Activated T-helper 2 cell treated with anti-CD3 and anti-CD28 coated beads, Interferon-gamma antibody, Interleukin-2, Interleukin-4, amounts not matched to agents 10 μg/mL and 5 μg/mL and 100 μg/mL, durations not matched to agents 14 hours and 24 hours and 36 hours (primary cell): ENCODE measurements at regions of chr4 and their contacts with region 1.

Region 1: DNA sequence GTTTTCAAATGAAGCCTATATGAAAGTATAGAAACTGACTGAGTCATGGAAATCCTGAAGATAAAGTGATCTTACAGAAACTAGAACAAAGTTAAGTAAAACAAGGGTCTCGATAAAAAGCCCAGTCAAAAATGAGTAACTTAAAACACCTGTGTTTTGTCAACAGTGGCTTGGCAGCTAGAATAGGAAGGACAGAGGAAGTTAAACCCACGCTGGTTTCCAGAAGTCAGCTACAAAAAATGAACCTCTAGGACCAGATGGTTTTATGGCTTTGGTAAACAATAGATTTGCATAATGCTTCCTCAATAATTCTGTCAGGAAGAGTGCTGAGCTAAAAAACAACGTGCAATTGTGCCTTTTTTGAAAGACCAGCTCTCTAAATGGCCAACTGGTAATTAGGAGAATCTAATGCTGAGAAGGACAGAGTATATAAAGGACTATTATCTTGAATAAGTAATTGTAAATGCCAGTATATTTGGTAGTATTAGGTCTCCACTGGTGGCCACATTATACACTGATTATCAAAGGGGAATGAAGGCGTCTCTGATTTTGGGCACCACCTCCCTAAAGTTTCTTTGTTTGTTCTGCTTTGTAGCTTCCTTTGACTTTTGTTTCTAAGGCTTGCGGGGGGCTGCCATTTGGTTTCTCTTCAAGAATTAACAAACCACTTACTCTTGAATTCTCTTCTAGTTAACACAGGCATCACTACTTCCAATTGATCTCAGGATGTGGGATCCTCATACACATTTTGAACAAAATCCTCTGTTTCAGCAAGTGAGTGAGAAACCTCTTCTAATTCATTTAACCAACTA is 72.2 kb upstream of the PPP3CA start:
- DNase-seq: no peak
- H3K4me3 Mint-ChIP-seq: peak overlapping the region; percentile 1
- H3K27ac Mint-ChIP-seq: peak overlapping the region; percentile 0
- H3K4me1 Mint-ChIP-seq: peaks cover 46% of the 10 kb centered on the region
- H3K27me3 Mint-ChIP-seq: peaks cover 17% of the 10 kb centered on the region

Region 2: DNA sequence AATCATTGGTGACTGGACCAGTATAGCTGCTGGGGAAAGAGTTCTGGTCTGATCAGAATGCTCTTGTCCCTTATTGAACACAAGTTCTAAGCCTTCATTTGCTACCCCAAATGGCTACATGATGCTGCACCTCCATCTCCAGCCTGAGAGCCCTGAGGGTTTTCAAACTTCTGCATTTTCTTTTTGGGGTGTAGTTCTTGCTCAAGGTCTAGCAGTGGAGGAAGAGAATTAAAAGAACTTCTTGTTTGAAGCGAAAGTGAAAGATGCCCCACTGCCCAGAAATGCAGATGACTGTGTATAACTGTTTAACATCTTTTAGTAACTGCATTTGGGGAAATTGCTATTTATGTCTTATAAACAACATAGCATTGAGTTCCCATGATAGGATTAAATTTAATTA is 1563.9 kb before region 1 on chr4:
- intact Hi-C with region 1: loop called (anchors 10 kb)
- DNase-seq: no peak
- H3K4me3 Mint-ChIP-seq: peak overlapping the region; percentile 3
- H3K27ac Mint-ChIP-seq: peak overlapping the region; percentile 83
- H3K4me1 Mint-ChIP-seq: peaks cover 68% of the 10 kb centered on the region
- H3K27me3 Mint-ChIP-seq: no peaks in the 10 kb centered on the region

Region 3: GRCh38 chr4:101020956-101021355 is 398.6 kb before region 1 on chr4:
- intact Hi-C with region 1: loop called (anchors 2 kb)
- DNase-seq: peak; percentile 10
- H3K4me3 Mint-ChIP-seq: peak overlapping the region; percentile 57
- H3K27ac Mint-ChIP-seq: peak overlapping the region; percentile 74
- H3K4me1 Mint-ChIP-seq: peaks cover 54% of the 10 kb centered on the region
- H3K27me3 Mint-ChIP-seq: no peaks in the 10 kb centered on the region

Region 4: DNA sequence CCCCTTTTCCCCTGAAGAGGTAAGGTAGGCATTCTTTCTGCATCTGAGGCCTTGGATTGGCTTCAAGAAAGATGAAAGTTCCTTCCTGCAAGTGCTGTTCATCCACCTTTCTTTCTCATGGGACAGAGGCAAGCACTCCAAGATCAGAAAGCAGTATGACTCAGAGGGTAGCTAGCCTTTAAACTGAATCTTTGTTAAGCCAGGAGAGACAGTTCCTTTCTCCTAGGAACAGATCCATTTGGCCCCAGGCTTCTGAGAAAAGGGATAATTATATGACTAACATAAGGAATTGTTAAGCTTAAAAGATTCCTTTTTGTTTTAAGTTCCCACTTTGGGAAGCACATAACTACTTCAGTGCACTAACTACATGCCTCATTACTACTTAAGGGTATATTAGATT is 264.2 kb before region 1 on chr4:
- intact Hi-C with region 1: loop called (anchors 5 kb)
- DNase-seq: no peak
- H3K4me3 Mint-ChIP-seq: no peak overlapping the region
- H3K27ac Mint-ChIP-seq: no peak overlapping the region
- H3K4me1 Mint-ChIP-seq: peaks cover 29% of the 10 kb centered on the region
- H3K27me3 Mint-ChIP-seq: no peaks in the 10 kb centered on the region

Region 5: GRCh38 chr4:101288365-101289145 is 131.0 kb before region 1 on chr4:
- intact Hi-C with region 1: loop called (anchors 5 kb)
- DNase-seq: no peak
- H3K4me3 Mint-ChIP-seq: no peak overlapping the region
- H3K27ac Mint-ChIP-seq: no peak overlapping the region
- H3K4me1 Mint-ChIP-seq: peaks cover 7% of the 10 kb centered on the region
- H3K27me3 Mint-ChIP-seq: peaks cover 1% of the 10 kb centered on the region

Region 6: GRCh38 chr4:101400096-101400495 is 19.4 kb before region 1 on chr4:
- intact Hi-C with region 1: loop called (anchors 1 kb)
- DNase-seq: no peak
- H3K4me3 Mint-ChIP-seq: no peak overlapping the region
- H3K27ac Mint-ChIP-seq: peak overlapping the region; percentile 51
- H3K4me1 Mint-ChIP-seq: peaks cover 18% of the 10 kb centered on the region
- H3K27me3 Mint-ChIP-seq: no peaks in the 10 kb centered on the region

Region 7: DNA sequence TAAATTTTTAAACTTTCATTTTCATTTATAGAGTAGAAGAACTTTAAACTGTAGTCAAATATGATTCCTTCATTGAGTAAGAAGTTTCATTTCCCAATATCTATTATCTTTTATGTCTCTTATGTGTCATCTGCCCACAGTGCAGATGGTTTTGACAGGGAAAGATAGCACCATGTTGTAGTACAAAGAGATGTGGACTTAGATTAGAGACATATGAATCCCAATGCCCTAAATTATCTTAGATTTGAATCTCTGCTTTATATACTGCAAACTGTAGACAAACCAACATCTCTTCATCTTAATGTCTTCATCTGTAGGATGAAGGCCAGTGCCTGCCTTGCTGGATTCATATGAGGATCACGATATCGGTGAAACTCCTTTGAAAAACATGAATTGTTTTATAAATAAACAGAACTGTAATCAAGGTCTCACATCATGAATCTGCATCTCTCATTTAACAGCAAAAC is 588.5 kb after region 1 on chr4:
- intact Hi-C with region 1: loop called (anchors 5 kb)
- DNase-seq: no peak
- H3K4me3 Mint-ChIP-seq: no peak overlapping the region
- H3K27ac Mint-ChIP-seq: no peak overlapping the region
- H3K4me1 Mint-ChIP-seq: peaks cover 14% of the 10 kb centered on the region
- H3K27me3 Mint-ChIP-seq: peaks cover 18% of the 10 kb centered on the region